ENCODE measurements at regions of chr18 and their contacts with region 1.

Region 1: GRCh38 chr18:26090130-26091046 is at the start of gene SS18:
- DNase-seq: peak; percentile 92
- ATAC-seq: peak; percentile 87
- H3K4me3 ChIP-seq: peak within 1 kb of the TSS; percentile 99
- H3K27ac ChIP-seq: peak within 1 kb of the TSS; percentile 73
- H3K4me1 ChIP-seq: peaks cover 20% of the 10 kb centered on the region
- H3K27me3 ChIP-seq: no peaks in the 10 kb centered on the region
- CTCF ChIP-seq: no peak
- total RNA-seq, gene SS18: 70.1 and 98.7 TPM in 2 replicates

Region 2: GRCh38 chr18:25862881-25863600 is 227.3 kb before region 1 on chr18:
- CTCF ChIA-PET with region 1: no interaction called
- POLR2A ChIA-PET with region 1: no interaction called
- intact Hi-C with region 1: no loop called
- DNase-seq: no peak
- ATAC-seq: no peak
- H3K4me3 ChIP-seq: no peak overlapping the region
- H3K27ac ChIP-seq: no peak overlapping the region
- H3K4me1 ChIP-seq: no peaks in the 10 kb centered on the region
- H3K27me3 ChIP-seq: peaks cover 41% of the 10 kb centered on the region; the same call in 1 of the 2 replicates
- CTCF ChIP-seq: no peak

Region 3: DNA sequence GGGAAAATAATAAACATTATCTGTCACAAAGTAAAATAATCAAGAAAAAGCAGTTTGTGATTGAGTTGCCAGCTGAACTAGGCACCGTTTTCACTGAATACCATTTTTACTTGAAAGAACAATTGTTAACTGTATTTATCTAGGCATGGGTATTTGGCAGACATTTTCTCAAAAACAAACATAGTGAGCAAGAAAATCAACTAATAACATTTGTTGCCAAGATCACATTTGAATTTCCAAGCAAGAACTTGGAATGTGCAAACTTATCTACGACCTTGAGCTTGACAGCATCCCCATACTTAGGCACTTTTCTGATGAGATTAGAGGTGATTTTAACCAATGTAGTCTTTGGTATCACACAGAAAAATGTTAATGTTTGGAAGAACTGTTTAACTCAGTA is 16.6 kb before region 1 on chr18:
- CTCF ChIA-PET with region 1: no interaction called
- POLR2A ChIA-PET with region 1: no interaction called
- intact Hi-C with region 1: loop called (anchors 2 kb)
- DNase-seq: peak; percentile 64
- ATAC-seq: peak; percentile 94
- H3K4me3 ChIP-seq: no peak overlapping the region
- H3K27ac ChIP-seq: peak overlapping the region; percentile 73
- H3K4me1 ChIP-seq: peaks cover 12% of the 10 kb centered on the region
- H3K27me3 ChIP-seq: no peaks in the 10 kb centered on the region
- CTCF ChIP-seq: no peak

Region 4: DNA sequence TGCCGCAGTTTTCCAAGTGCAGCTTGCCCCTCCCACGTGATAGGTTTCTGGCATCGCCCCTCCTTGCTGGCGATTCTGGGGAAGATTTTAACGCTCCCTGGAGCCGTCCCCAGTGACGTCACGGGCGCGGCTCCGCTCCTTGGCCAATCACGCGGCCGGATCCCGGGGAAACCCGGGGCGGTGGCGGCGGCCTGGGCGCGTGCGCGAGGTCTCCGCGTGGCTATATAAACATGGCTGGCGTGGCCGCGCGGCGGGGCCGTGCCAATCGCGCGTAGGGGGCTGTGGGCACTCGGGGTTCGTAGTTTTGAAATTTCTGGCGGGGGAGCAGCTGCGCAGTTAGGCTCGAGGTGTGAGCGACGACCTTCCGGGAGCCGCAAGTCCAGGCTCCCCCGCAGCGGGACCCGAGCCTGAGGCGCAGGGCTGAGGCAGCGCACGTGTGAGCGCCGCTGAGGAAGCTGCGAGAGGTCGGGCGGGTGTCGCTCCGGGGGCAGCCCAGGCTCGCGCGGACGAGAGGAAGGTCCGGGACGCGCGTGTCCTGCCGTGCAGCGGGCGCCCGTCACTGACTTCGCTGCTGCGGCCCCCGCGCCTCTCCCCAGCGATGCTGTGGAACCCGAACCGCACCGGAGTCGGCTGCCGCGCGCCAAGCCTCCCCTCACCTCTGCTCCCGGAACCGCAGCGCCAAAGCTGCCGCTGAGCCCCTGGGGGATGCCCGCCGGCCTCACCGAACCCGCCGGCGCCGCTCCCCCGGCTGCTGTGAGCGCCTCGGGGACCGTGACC is 136.0 kb after region 1 on chr18 and contains the start of gene TAF4B:
- CTCF ChIA-PET with region 1: no interaction called
- POLR2A ChIA-PET with region 1: no interaction called
- intact Hi-C with region 1: loop called (anchors 2 kb)
- DNase-seq: peak; percentile 95
- ATAC-seq: peak; percentile 87
- H3K4me3 ChIP-seq: peak within 1 kb of the TSS; percentile 89
- H3K27ac ChIP-seq: peak within 1 kb of the TSS; percentile 22
- H3K4me1 ChIP-seq: peaks cover 19% of the 10 kb centered on the region; the same call in 1 of the 2 replicates
- H3K27me3 ChIP-seq: no peaks in the 10 kb centered on the region
- CTCF ChIP-seq: no peak
- total RNA-seq, gene TAF4B: 8.3 and 13.0 TPM in 2 replicates